ENCODE measurements at regions of chrX and their contacts with region 1.

Region 1: GRCh38 chrX:25015486-25016360 is at the start of gene ARX:
- DNase-seq: peak; percentile 41
- H3K4me3 Mint-ChIP-seq: no peak within 1 kb of the TSS
- H3K27ac Mint-ChIP-seq: no peak within 1 kb of the TSS
- H3K4me1 Mint-ChIP-seq: peaks cover 13% of the 10 kb centered on the region
- H3K27me3 Mint-ChIP-seq: peaks cover 53% of the 10 kb centered on the region
- total RNA-seq, gene ARX: not detected

Region 2: GRCh38 chrX:24748202-24748843 is 267.4 kb before region 1 on chrX:
- CTCF ChIA-PET with region 1: no interaction called
- intact Hi-C with region 1: loop called (anchors 1 kb)
- DNase-seq: no peak
- H3K4me3 Mint-ChIP-seq: no peak overlapping the region
- H3K27ac Mint-ChIP-seq: no peak overlapping the region
- H3K4me1 Mint-ChIP-seq: no peaks in the 10 kb centered on the region
- H3K27me3 Mint-ChIP-seq: no peaks in the 10 kb centered on the region

Region 3: GRCh38 chrX:25034889-25035288 is 19.2 kb after region 1 on chrX:
- CTCF ChIA-PET with region 1: no interaction called
- intact Hi-C with region 1: no loop called
- DNase-seq: no peak
- H3K4me3 Mint-ChIP-seq: no peak overlapping the region
- H3K27ac Mint-ChIP-seq: no peak overlapping the region
- H3K4me1 Mint-ChIP-seq: no peaks in the 10 kb centered on the region
- H3K27me3 Mint-ChIP-seq: peaks cover 2% of the 10 kb centered on the region

Region 4: GRCh38 chrX:25144043-25144940 is 128.6 kb after region 1 on chrX:
- CTCF ChIA-PET with region 1: interaction called, 10 read pairs
- intact Hi-C with region 1: no loop called
- DNase-seq: peak; percentile 51
- H3K4me3 Mint-ChIP-seq: no peak overlapping the region
- H3K27ac Mint-ChIP-seq: no peak overlapping the region
- H3K4me1 Mint-ChIP-seq: no peaks in the 10 kb centered on the region
- H3K27me3 Mint-ChIP-seq: peaks cover 2% of the 10 kb centered on the region